AG04450 (cell line): ENCODE measurements at regions of chr1 and their contacts with region 1.

Region 1: DNA sequence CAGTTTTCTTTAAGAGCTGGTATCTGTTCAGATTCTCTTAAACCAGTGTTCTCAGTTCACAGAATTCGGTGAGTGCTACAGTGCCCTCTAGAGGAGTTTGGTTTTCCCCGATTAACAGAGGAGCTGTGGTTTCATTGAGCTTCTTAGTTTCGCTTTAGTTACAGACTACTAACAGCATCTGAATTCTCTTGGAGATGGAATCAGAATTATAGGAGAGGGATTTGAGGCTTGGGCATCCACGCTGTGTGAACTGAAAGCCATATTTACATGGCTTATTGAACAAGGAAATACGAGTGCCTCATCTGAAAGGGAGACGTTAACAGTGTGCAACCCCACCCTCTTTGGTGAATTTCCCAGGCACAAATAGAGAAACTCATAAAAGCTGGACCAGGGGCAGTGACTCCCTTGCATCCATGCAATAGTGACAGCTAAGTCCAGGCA is 202.0 kb downstream of the USH2A start:
- DNase-seq: peak; percentile 57
- H3K4me3 ChIP-seq: peak overlapping the region; percentile 65
- H3K27ac ChIP-seq: peak overlapping the region; percentile 65
- H3K27me3 ChIP-seq: no peaks in the 10 kb centered on the region
- CTCF ChIP-seq: peak; percentile 83

Region 2: GRCh38 chr1:215987092-215987875 is 234.0 kb before region 1 on chr1:
- CTCF ChIA-PET with region 1: interaction called, 28 read pairs
- POLR2A ChIA-PET with region 1: no interaction called
- DNase-seq: no peak
- H3K4me3 ChIP-seq: no peak overlapping the region
- H3K27ac ChIP-seq: no peak overlapping the region
- H3K27me3 ChIP-seq: no peaks in the 10 kb centered on the region
- CTCF ChIP-seq: no peak

Region 3: GRCh38 chr1:216111842-216112241 is 109.4 kb before region 1 on chr1:
- CTCF ChIA-PET with region 1: interaction called, 26 read pairs
- POLR2A ChIA-PET with region 1: no interaction called
- DNase-seq: no peak
- H3K4me3 ChIP-seq: no peak overlapping the region
- H3K27ac ChIP-seq: no peak overlapping the region
- H3K27me3 ChIP-seq: no peaks in the 10 kb centered on the region
- CTCF ChIP-seq: peak; percentile 52

Region 4: GRCh38 chr1:216193839-216194439 is 27.3 kb before region 1 on chr1:
- CTCF ChIA-PET with region 1: interaction called, 16 read pairs
- POLR2A ChIA-PET with region 1: no interaction called
- DNase-seq: no peak
- H3K4me3 ChIP-seq: no peak overlapping the region
- H3K27ac ChIP-seq: no peak overlapping the region
- H3K27me3 ChIP-seq: no peaks in the 10 kb centered on the region
- CTCF ChIP-seq: peak; percentile 34; the same call in 1 of the 2 replicates

Region 5: GRCh38 chr1:216247937-216248336 is 26.7 kb after region 1 on chr1:
- CTCF ChIA-PET with region 1: interaction called, 14 read pairs
- POLR2A ChIA-PET with region 1: no interaction called
- DNase-seq: no peak
- H3K4me3 ChIP-seq: no peak overlapping the region
- H3K27ac ChIP-seq: no peak overlapping the region
- H3K27me3 ChIP-seq: no peaks in the 10 kb centered on the region
- CTCF ChIP-seq: no peak

Region 6: GRCh38 chr1:216566641-216567205 is 345.4 kb after region 1 on chr1:
- CTCF ChIA-PET with region 1: interaction called, 58 read pairs
- POLR2A ChIA-PET with region 1: no interaction called
- DNase-seq: no peak
- H3K4me3 ChIP-seq: no peak overlapping the region
- H3K27ac ChIP-seq: no peak overlapping the region
- H3K27me3 ChIP-seq: no peaks in the 10 kb centered on the region
- CTCF ChIP-seq: peak; percentile 60